ENCODE measurements at regions of chr16 and their contacts with region 1.

Region 1: GRCh38 chr16:96935-97381 is 18.9 kb downstream of the MPG start:
- DNase-seq: peak; percentile 94
- ATAC-seq: peak; percentile 86

Region 2: GRCh38 chr16:65671-66137 is 31.3 kb before region 1 on chr16:
- intact Hi-C with region 1: loop called (anchors 1 kb)
- DNase-seq: peak; percentile 93
- ATAC-seq: peak; percentile 78

Region 3: DNA sequence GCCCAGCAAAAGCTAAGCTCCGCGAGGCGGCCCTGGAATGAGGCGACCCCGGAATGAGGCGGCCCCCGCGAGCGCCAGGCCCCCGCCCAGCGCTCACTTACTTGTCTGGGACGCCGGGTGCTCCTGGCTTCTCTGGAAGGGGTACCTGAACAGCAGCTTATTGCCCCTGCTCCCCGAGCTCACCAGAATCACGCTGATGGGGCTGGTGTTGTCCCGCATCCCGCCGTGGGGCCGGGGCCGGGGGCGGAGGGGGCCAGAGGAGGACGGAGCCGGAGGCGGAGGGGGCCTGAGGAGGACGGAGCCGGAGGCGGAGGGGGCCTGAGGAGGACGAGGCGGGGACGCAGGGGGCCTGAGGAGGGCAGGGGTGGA is 41.1 kb after region 1 on chr16:
- intact Hi-C with region 1: no loop called
- DNase-seq: peak; percentile 46
- ATAC-seq: peak; percentile 25

Region 4: DNA sequence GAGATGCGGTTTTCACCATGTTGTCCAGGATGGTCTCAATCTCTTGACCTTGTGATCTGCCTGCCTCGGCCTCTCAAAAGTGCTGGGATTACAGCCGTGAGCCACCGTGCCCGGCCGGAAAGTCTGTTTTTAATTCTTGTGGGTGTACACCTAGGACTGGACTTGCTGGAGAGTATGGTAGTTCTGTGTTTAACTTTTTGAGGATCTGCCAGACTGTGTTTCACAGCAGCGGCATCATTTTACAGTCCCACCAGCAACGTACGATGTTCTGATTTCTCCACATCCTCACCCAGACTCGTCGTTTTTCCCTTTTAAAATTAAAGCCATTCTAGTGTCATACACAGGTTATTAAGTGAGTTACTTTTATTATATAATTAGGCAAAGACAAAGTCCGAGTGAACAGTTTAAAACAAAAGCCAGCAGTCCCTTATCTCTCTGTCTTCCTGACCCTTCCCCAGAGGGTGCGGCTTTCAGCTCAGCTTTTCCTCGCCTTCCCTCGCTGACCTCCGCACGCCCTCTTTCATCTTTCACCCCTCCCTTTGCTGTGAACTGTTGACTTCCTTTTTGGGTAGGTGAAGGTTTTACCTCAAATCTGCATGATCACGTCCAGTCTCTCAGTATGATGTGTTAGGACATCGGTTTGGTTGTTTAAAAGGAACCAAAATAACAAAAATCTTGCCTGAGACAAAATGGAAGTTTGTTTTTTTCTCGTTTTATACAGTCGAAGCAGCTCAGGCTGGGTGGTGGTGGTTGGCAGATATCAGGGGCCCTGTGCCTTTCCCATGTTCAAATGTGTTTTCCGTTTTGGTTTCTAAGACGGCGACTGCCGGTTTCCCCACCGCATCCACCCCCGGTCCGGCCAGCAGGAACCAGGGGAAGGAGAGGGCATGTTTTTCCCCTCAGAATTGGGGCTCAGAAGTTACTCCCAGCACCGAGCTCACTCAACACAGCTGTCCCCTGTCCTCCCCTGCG is 155.7 kb after region 1 on chr16:
- intact Hi-C with region 1: no loop called
- DNase-seq: peak; percentile 24
- ATAC-seq: peak; percentile 55

Measured in Right ventricle myocardium superior (tissue), 1 donor.